SK-N-SH (cell line): ENCODE measurements at regions of chr17 and their contacts with region 1.

Region 1: GRCh38 chr17:48047741-48048383 is at the start of gene NFE2L1:
- DNase-seq: peak; percentile 97
- H3K4me3 ChIP-seq: peak within 1 kb of the TSS; percentile 77 to 90
- H3K27ac ChIP-seq: peak within 1 kb of the TSS; percentile 95 to 98
- H3K4me1 ChIP-seq: peaks cover 42 to 46% of the 10 kb centered on the region in 2 experiments
- H3K27me3 ChIP-seq: no peaks in the 10 kb centered on the region
- CTCF ChIP-seq: no peak
- EP300 ChIP-seq: peak in 1 of 2 experiments; percentile 14; a peak in 1 of 4 replicates
- RAD21 ChIP-seq: no peak
- polyA plus RNA-seq, gene NFE2L1: 159 and 174 TPM in 2 replicates

Region 2: GRCh38 chr17:47915776-47916398 is 132.0 kb before region 1 on chr17:
- CTCF ChIA-PET with region 1: no interaction called
- POLR2A ChIA-PET with region 1: no interaction called
- DNase-seq: no peak
- H3K4me3 ChIP-seq: no peak overlapping the region
- H3K27ac ChIP-seq: no peak overlapping the region
- H3K4me1 ChIP-seq: no peaks in the 10 kb centered on the region
- H3K27me3 ChIP-seq: no peaks in the 10 kb centered on the region
- CTCF ChIP-seq: no peak
- EP300 ChIP-seq: no peak
- RAD21 ChIP-seq: no peak

Region 3: GRCh38 chr17:47978324-47978723 is 69.5 kb before region 1 on chr17:
- CTCF ChIA-PET with region 1: interaction called, 10 read pairs
- POLR2A ChIA-PET with region 1: interaction called, 5 read pairs
- DNase-seq: peak; percentile 95
- H3K4me3 ChIP-seq: no peak overlapping the region; a peak in 1 of 4 replicates
- H3K27ac ChIP-seq: peak overlapping the region in 1 of 2 experiments; percentile 98; a peak in 2 of 4 replicates
- H3K4me1 ChIP-seq: peaks cover 0 to 49% of the 10 kb centered on the region in 2 experiments; a peak in 2 of 4 replicates
- H3K27me3 ChIP-seq: no peaks in the 10 kb centered on the region
- CTCF ChIP-seq: peak; percentile 99
- EP300 ChIP-seq: no peak
- RAD21 ChIP-seq: peak; percentile 99

Region 4: GRCh38 chr17:48011405-48012150 is 36.3 kb before region 1 on chr17:
- CTCF ChIA-PET with region 1: interaction called, 1,200 read pairs
- POLR2A ChIA-PET with region 1: interaction called, 18 read pairs
- DNase-seq: peak; percentile 59
- H3K4me3 ChIP-seq: peak overlapping the region; percentile 42 to 51
- H3K27ac ChIP-seq: peak overlapping the region in 1 of 2 experiments; percentile 100; a peak in 3 of 4 replicates
- H3K4me1 ChIP-seq: peaks cover 15 to 54% of the 10 kb centered on the region in 2 experiments
- H3K27me3 ChIP-seq: no peaks in the 10 kb centered on the region
- CTCF ChIP-seq: peak; percentile 57
- EP300 ChIP-seq: no peak
- RAD21 ChIP-seq: peak; percentile 68

Region 5: DNA sequence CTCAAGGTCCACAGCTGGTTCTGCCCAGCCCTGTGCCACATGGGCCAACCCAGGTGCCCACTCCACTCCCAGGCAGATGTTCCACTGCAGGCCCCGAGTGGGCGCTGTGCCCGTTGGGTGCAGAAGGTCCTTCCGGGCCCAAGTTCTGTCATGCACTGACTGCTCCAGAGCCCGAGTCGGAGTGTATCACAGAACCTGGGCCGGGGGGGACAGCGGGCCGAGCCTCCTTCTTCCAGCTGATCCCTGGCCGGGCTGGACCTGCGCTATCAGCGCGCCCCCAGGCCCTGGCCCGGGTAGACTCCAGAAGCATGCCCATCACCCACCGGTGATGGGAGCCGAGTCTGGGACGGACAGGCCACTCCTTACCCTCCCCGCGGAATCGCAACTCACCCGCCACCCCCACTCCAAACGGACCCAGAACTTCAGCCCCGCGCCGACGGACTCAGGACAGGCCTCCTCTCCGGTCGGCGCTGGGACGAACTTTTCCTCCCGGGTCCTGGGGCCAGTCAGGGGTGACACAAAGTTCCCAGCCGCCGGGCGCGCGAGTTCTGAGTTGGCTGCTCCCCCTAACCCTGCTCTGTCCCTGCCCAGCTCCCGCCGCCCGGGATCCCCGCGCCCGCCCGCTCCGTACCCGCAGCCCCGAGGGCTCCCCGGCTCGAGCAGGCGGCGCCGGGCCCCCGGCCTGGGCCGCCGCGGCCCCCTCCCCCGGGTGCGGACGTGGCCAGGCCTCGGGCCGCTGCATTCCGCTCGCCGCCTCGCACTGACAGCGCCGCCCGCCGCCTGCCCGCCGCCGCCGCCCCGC is 10.6 kb before region 1 on chr17 and contains the start of gene COPZ2:
- CTCF ChIA-PET with region 1: interaction called, 1,200 read pairs
- POLR2A ChIA-PET with region 1: interaction called, 34 read pairs
- DNase-seq: peak; percentile 85
- H3K4me3 ChIP-seq: peak within 1 kb of the TSS; percentile 53 to 63
- H3K27ac ChIP-seq: peak within 1 kb of the TSS in 1 of 2 experiments; percentile 1; a peak in 1 of 4 replicates
- H3K4me1 ChIP-seq: peaks cover 5 to 14% of the 10 kb centered on the region in 2 experiments; a peak in 2 of 4 replicates
- H3K27me3 ChIP-seq: no peaks in the 10 kb centered on the region
- CTCF ChIP-seq: peak; percentile 69
- EP300 ChIP-seq: no peak
- RAD21 ChIP-seq: peak; percentile 13; the same call in 1 of the 2 replicates
- polyA plus RNA-seq, gene COPZ2: 31.2 and 36.9 TPM in 2 replicates

Region 6: DNA sequence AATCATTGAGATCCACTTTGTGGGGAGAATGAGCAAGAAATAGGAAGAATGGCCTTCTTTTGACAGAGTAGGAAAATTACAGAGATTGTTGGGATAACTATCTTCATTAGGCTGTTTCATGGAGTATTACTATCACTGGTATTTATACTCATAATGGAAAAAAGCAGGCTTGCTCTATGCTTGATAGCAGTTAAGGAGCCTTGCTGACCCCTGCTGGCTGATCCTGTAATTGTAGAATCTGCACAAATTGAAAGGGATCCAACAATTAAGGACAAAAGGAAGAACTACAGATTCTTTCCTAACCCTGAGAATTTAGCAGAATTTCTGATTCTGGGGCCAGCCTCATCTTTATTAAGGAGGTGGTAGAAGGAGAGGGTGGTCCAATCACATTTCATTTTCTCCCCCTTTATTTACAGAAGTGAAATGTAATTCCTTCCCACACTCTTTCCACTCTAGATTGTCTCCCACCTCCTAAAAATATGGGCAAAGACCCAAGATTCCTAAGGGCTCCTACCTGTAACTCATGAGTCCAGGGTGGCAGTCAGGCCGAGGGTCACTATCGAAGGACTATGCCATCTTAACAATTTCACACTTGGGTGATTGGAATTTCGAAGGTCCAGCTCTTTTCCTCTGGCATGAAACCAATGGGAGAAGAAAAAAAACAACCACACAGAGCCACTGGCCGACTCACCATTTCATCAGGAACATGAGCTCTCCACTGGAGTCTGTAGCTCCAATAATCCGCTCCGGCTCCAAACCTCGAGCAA is 26.6 kb after region 1 on chr17:
- CTCF ChIA-PET with region 1: interaction called, 449 read pairs
- POLR2A ChIA-PET with region 1: interaction called, 8 read pairs
- DNase-seq: peak; percentile 77
- H3K4me3 ChIP-seq: no peak overlapping the region
- H3K27ac ChIP-seq: peak overlapping the region in 1 of 2 experiments; percentile 33; a peak in 1 of 4 replicates
- H3K4me1 ChIP-seq: no peaks in the 10 kb centered on the region
- H3K27me3 ChIP-seq: no peaks in the 10 kb centered on the region
- CTCF ChIP-seq: peak; percentile 98
- EP300 ChIP-seq: no peak
- RAD21 ChIP-seq: peak; percentile 96

Region 7: DNA sequence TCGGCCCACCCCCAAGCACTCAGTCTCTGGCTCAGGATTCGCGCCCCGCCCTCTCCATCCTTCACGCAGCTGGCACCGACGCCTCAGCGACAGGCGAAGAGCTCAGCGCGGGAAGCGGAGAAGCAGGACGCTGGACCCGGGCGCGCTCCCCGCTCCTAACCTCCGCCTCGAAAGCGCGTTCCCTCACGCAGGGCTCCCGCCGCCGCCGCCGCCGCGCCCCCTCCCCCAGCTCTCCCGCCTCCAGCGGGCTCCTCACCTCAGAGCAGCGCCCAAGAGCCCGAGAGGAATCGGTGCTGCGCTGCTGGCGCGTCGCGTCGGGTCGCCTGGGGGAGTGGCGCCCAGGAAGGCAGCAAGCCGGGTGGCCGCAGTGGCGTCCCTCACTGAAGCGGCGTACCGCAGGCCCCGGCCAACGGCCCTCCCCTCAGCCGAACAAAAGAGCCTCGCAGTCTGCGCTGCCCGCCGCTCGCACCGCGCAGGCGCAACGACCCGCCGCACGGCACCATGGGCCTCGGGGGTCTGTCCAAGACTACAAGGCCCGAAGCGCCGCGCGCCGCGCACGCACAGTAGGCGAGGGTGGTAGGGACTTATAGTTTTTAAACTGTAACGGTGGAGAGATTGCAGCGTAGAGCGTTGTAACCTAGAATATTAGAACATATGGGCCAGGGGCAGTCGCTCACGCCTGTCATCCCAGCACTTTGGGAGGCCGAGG is 53.3 kb after region 1 on chr17 and contains the start of gene CBX1:
- CTCF ChIA-PET with region 1: interaction called, 33 read pairs
- POLR2A ChIA-PET with region 1: interaction called, 21 read pairs
- DNase-seq: peak; percentile 98
- H3K4me3 ChIP-seq: peak within 1 kb of the TSS; percentile 66 to 90
- H3K27ac ChIP-seq: peak within 1 kb of the TSS; percentile 81 to 91
- H3K4me1 ChIP-seq: peaks cover 3 to 6% of the 10 kb centered on the region in 2 experiments; a peak in 2 of 4 replicates
- H3K27me3 ChIP-seq: no peaks in the 10 kb centered on the region
- CTCF ChIP-seq: no peak; the same call in 1 of the 2 replicates
- EP300 ChIP-seq: no peak; a peak in 1 of 4 replicates
- RAD21 ChIP-seq: no peak
- polyA plus RNA-seq, gene CBX1: 102 and 112 TPM in 2 replicates

Region 8: DNA sequence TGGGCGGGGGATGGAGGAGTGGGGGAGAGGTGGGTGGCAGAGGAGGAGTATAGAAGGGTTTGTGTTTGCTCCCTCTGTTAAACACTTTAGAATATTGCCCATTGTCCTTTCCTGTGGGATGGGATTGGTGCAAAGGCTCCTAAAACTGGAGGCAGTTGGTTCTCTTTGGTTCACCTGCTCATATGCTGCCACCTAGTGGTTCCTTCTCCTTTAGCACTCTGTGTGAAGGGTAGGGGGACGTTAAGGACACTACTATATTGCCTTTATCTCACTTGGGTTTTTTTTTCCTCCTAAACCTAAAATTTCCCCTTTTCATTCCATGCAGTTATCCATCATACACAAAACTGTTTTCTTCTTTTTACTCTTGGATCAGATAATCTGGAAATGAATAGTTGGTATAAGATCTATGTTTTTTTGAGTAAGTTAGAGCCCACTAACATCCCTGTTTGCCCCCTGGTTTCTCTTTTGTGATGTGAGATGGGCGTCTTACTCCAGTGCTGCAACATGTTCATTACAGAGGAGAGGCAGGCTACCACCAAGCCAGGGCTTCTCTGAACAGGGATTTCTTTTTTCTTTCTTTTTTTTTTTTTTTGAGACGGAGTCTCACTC is 83.5 kb after region 1 on chr17:
- CTCF ChIA-PET with region 1: interaction called, 20 read pairs
- POLR2A ChIA-PET with region 1: no interaction called
- DNase-seq: peak; percentile 82
- H3K4me3 ChIP-seq: no peak overlapping the region; a peak in 1 of 4 replicates
- H3K27ac ChIP-seq: no peak overlapping the region
- H3K4me1 ChIP-seq: peaks cover 7 to 17% of the 10 kb centered on the region in 2 experiments; a peak in 2 of 4 replicates
- H3K27me3 ChIP-seq: peaks cover 8% of the 10 kb centered on the region; the same call in 1 of the 2 replicates
- CTCF ChIP-seq: peak; percentile 99
- EP300 ChIP-seq: no peak
- RAD21 ChIP-seq: peak; percentile 99